ENCODE measurements at regions of chr1 and their contacts with region 1.

Region 1: DNA sequence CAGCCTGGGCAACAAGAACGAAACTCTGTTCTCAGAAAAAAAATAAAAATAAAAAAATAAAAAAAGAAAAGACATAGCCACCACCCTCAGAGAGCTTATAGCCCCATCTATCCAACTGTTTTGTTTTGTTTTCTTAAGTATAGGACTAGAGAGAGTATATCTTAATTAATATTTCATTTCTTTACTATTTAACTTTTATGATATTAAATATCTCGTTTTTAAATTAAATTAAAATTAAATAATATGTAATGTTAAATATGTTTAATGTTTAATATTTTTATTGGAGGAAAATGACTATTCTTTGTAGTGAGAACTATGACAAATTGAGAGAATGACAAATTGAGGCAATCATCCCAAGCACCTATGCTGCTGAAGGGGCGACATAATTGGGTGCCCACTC is 33.1 kb upstream of the YTHDF2 start:
- DNase-seq: no peak
- ATAC-seq: no peak
- H3K4me3 ChIP-seq: no peak overlapping the region
- H3K27ac ChIP-seq: no peak overlapping the region
- H3K4me1 ChIP-seq: no peaks in the 10 kb centered on the region
- H3K27me3 ChIP-seq: no peaks in the 10 kb centered on the region
- CTCF ChIP-seq: no peak
- EP300 ChIP-seq: no peak
- POLR2A ChIP-seq: no peak
- RAD21 ChIP-seq: no peak

Region 2: GRCh38 chr1:28718586-28719331 is 15.1 kb after region 1 on chr1:
- CTCF ChIA-PET with region 1: no interaction called
- POLR2A ChIA-PET with region 1: interaction called, 19 read pairs
- in situ Hi-C with region 1: no loop called
- intact Hi-C with region 1: no loop called
- DNase-seq: peak; percentile 57 to 80 (median 63)
- ATAC-seq: peak; percentile 83
- H3K4me3 ChIP-seq: no peak overlapping the region
- H3K27ac ChIP-seq: peak overlapping the region; percentile 66
- H3K4me1 ChIP-seq: peaks cover 0 to 17% of the 10 kb centered on the region in 2 experiments; a peak in 3 of 5 replicates
- H3K27me3 ChIP-seq: no peaks in the 10 kb centered on the region
- CTCF ChIP-seq: no peak
- EP300 ChIP-seq: no peak
- POLR2A ChIP-seq: no peak
- RAD21 ChIP-seq: no peak; a peak in 1 of 4 replicates

Measured in K562 (cell line).